MCF 10A (cell line): ENCODE measurements at regions of chr10 and their contacts with region 1.

Region 1: DNA sequence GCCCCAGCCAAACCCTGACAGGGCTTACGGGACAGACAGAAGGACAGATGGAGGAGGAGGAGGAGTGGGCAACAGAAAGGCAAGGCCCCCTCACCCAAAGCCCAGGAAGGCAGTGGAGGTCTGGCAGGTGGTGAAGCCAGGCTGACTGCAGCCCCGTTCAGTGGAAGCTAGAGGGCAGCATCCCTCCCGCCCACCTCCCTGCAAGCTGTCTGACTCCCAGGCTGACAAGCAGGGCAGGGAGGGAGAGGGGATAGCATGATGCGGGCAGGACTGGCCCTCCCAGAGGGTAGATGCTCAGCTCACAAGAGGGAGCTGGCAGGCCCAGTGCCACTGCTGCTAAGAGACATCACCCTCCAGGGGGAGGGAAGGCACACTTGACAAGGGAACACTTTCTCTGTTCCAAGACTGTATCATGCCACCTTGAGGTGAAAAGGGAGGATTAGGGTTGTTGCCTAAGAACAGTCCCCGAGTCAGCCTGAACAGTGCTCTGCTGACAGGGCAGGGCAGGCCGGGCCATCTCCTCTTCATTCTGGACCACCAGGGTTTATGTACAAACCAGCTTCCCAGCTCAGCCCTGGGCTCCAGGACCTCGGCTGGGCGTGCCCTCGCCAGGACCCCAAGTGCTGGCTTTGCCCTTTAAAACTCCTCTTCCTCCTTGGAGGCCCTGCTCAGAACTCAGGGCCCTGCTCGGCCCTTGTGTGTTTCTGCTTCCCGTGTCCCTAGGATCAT is 61.8 kb downstream of the RASGEF1A start:
- DNase-seq: peak; percentile 64
- H3K4me3 Mint-ChIP-seq: no peak overlapping the region
- H3K27ac Mint-ChIP-seq: no peak overlapping the region
- H3K4me1 Mint-ChIP-seq: no peaks in the 10 kb centered on the region
- H3K27me3 Mint-ChIP-seq: no peaks in the 10 kb centered on the region
- CTCF ChIP-seq: peak; percentile 61

Region 2: DNA sequence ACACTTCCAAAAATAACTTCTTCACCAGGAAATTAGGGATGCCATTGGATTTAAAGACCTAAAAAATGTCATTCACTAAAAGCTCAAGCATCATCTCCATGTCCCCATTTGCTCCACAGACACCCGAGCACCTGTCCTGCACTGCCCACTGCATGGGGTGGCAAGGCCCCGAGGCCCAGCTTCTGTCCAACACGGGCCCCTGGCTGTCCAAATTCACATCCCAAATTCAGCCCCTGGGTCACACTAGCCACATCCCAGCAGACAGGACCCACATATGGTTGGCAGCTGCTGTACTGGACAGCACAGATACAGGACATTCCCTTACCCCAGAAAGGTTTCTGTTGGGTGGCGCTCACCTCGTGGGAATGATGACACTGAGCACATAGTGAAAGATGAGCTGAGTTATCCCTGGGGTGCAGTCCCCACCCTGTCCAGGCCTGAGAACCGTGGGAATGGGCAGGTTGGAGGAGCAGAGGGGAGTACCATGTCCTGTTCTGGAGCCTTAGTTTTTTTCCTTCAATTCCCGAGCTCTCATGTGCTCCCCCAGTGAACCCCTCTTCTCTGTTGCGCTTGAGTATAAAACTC is 11.5 kb before region 1 on chr10:
- CTCF ChIA-PET with region 1: interaction called, 10 read pairs
- POLR2A ChIA-PET with region 1: no interaction called
- intact Hi-C with region 1: no loop called
- DNase-seq: no peak
- H3K4me3 Mint-ChIP-seq: no peak overlapping the region
- H3K27ac Mint-ChIP-seq: no peak overlapping the region
- H3K4me1 Mint-ChIP-seq: no peaks in the 10 kb centered on the region
- H3K27me3 Mint-ChIP-seq: no peaks in the 10 kb centered on the region
- CTCF ChIP-seq: no peak

Region 3: GRCh38 chr10:43287056-43288007 is 82.2 kb after region 1 on chr10:
- CTCF ChIA-PET with region 1: interaction called, 7 read pairs
- POLR2A ChIA-PET with region 1: no interaction called
- intact Hi-C with region 1: loop called (anchors 10 kb)
- DNase-seq: peak; percentile 86
- H3K4me3 Mint-ChIP-seq: peak overlapping the region; percentile 38
- H3K27ac Mint-ChIP-seq: peak overlapping the region; percentile 73
- H3K4me1 Mint-ChIP-seq: peaks cover 12% of the 10 kb centered on the region
- H3K27me3 Mint-ChIP-seq: peaks cover under 1% of the 10 kb centered on the region
- CTCF ChIP-seq: no peak